ENCODE measurements at regions of chr12 and their contacts with region 1.

Region 1: DNA sequence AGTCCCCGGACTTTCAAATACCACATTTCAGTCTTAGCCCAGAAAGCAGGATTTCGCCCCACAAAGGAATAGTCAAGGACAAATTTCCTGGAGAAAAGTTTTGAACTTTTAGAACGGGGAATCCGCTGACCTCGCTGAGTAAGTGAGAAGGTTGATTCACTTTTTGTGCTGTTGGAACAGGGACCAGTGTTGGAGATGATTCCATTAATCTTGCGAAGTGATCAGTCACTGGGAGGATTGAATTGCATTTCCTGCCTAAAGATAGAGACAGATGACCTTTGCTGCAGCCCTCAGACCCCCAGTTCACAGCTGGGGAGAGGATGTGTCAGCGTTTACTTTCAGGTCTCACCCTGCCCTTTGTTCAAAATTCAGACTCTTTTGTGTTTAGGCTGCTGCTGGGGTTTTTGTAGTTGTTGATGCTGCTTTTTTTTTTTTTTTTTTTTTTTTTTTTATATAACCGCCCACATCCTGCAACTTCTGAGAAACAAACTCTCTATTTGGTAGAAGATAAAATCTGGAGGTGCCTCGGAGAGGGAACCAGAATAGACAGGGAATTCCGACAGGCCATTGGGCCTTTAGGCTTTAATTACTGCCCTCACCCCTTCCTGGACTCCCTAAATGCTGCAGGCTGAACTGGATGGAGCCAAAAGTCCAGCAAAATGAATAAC is 9.8 kb upstream of the KDM2B start:
- DNase-seq: no peak
- H3K4me3 ChIP-seq: peak overlapping the region in 3 of 4 donors; percentile 44 to 46 (median 44)
- H3K27ac ChIP-seq: peak overlapping the region; percentile 75 to 84 (median 77)
- H3K4me1 ChIP-seq: peaks cover 0 to 11% (median 11%) of the 10 kb centered on the region in 4 donors
- H3K27me3 ChIP-seq: no peaks in the 10 kb centered on the region
- CTCF ChIP-seq: no peak
- EP300 ChIP-seq: no peak
- POLR2A ChIP-seq: no peak

Region 2: DNA sequence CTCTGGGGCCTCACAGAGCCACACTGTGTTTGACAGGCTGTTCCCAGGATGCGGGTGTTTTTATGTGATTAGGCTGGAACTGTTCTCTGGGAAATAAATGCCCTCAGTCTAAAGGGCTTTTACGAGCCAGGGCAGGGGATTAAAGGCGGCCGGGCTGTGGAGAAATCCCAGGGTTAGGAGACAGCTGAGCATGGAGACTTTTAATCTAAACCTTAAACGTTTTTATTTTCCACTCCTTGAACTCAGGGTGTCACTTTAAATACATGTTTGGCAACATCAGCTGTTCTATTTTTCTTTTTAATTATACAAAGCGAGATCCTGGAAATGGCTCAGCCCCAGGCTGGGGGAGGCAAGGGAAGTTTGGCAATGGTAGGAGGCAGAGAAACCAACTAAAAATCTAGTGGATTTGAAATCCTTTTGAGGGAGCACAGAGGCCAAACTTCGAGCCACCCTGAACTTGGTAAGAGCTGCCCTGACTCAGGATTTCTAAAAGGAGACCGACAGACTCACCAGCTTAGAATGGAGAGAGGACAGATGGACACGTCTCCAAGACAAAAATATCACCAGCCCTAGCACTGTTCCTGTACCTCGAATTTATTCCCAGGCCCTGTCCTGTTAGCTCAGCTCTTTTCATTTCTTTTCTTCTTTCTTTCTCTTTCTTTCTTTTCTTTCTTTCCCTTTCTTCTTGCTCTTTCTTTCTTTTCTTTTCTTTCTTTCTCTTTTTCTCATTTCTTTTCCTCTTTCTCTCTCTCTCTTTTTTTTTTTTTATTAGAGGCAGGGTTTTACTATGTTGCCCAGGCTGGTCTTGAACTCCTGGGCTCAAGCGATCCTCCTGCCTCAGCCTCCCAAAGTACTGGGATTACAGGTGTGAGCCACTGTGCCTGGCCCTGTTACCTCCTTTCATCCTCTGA is 19.9 kb after region 1 on chr12:
- intact Hi-C with region 1: loop called (anchors 2 kb)
- DNase-seq: peak; percentile 89
- H3K4me3 ChIP-seq: peak overlapping the region in 3 of 4 donors; percentile 12 to 19 (median 17)
- H3K27ac ChIP-seq: peak overlapping the region; percentile 78 to 86 (median 81)
- H3K4me1 ChIP-seq: peaks cover 0 to 27% (median 16%) of the 10 kb centered on the region in 4 donors
- H3K27me3 ChIP-seq: no peaks in the 10 kb centered on the region
- CTCF ChIP-seq: no peak
- EP300 ChIP-seq: peak in 1 of 4 donors; percentile 64
- POLR2A ChIP-seq: no peak